ENCODE measurements at regions of chr2 and their contacts with region 1.

Region 1: GRCh38 chr2:197113275-197113711 is 186.8 kb upstream of the PGAP1 start:
- DNase-seq: peak; percentile 19

Region 2: GRCh38 chr2:196967116-196967515 is 146.2 kb before region 1 on chr2:
- CTCF ChIA-PET with region 1: no interaction called
- POLR2A ChIA-PET with region 1: no interaction called
- DNase-seq: peak; percentile 24

Region 3: GRCh38 chr2:197168705-197169104 is 55.4 kb after region 1 on chr2:
- CTCF ChIA-PET with region 1: interaction called, 11 read pairs
- POLR2A ChIA-PET with region 1: no interaction called
- DNase-seq: peak; percentile 78